ENCODE measurements at regions of chr15 and their contacts with region 1.

Region 1: DNA sequence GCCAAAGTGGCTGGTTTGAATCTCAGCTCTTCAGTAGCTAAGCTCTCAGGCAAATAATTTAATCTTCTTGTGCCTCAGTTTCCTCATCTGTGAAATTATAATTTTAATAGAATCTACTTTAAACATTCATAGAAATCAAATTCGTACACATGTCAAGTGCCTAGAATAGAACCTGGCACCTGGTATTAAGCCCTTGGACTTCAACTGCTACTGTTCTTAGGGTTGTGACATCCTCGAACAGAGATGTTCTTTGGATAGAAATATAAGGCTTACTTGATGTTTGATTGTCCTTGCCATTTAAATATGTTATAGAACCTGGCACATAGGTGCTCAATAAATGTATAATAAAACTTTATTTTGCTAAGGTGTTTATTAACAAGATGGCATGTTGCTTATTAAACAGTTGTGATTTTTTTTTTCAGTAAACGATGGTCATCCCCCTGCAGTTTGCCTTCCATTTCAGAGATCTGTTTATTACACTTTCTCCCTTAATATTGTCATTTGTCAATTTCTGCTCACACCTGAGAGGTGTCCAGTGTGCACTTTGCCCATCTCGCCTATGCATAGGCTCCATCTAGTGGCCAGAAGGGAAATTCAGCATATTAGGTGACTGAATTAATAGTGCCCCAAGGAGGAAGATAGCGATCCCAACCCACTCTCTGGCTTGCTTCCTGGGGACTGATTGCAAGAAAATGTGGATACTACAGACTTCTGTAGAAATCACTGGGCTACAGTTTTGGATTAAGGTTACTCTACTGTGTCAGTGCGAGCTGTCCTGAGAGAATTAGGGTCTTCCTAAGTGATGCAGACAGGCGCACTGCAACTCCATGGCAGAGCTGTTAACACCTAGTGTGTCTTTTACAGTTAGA is 10.7 kb downstream of the IGF1R start:
- DNase-seq: peak; percentile 74
- H3K4me3 ChIP-seq: no peak overlapping the region
- H3K27ac ChIP-seq: no peak overlapping the region
- H3K4me1 ChIP-seq: peaks cover 43% of the 10 kb centered on the region
- H3K27me3 ChIP-seq: no peaks in the 10 kb centered on the region

Region 2: DNA sequence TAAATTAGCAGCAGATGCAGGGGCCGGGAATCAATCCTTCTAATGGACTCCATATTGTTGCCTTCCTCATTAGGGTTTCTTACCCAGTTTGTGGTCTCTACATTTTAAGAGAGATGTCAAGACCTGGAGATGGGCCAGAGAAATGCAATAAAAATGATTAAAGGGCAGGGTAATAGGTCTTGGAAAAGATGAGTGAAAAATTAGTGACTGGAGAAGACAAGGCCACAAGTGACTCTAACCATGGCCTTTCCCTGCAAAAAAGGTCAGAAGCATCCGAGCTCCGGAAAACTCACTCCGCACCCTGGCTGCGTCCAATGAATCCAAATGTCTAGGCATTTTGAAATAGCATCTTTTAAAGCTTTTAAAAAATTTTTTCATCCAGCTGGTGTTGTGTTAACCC is 545.7 kb before region 1 on chr15:
- in situ Hi-C with region 1: no loop called
- DNase-seq: no peak
- H3K4me3 ChIP-seq: no peak overlapping the region
- H3K27ac ChIP-seq: no peak overlapping the region
- H3K4me1 ChIP-seq: no peaks in the 10 kb centered on the region
- H3K27me3 ChIP-seq: no peaks in the 10 kb centered on the region

Region 3: DNA sequence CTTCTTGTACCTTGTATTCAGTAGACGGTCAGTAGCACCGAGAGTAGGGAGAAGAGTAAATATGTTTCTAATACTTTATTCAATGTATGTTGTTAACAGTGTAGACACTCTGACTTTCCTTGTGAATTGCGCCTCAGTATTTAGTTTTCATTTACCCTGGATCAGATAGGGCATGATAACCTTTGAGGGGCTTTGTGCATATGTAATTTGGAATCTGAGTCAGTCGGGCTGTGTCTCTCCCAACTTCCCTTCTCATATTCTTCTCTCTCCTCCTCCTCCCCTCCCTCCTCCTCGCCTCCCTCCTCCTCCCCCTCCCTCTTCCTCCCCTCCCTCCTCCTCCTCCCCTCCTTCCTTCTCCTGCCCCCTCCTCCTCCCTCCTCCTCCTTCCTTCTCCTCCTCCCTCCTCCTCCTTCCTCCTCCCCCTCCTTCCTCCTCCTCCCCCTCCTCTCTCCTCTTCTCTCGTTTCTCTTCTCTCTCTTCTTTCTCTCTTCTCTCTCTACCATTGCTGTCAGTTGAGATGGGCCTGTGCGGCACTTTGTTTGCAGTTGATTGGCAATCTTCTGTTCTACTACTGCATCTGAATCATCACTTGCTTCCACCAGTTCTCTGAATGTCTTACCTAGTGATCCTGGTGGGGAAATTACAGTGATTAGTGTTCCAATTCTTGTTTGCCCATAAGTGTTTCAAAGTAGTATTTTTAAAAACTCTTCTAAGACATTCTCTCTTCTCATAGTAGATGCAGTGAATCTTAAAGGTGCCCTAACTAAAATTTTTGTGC is 186.2 kb after region 1 on chr15:
- in situ Hi-C with region 1: loop called (anchors 10 kb)
- DNase-seq: no peak
- H3K4me3 ChIP-seq: no peak overlapping the region
- H3K27ac ChIP-seq: no peak overlapping the region
- H3K4me1 ChIP-seq: peaks cover 16% of the 10 kb centered on the region
- H3K27me3 ChIP-seq: no peaks in the 10 kb centered on the region

Region 4: GRCh38 chr15:99059010-99059981 is 400.2 kb after region 1 on chr15:
- in situ Hi-C with region 1: loop called (anchors 25 kb)
- DNase-seq: peak; percentile 93
- H3K4me3 ChIP-seq: peak overlapping the region; percentile 81
- H3K27ac ChIP-seq: peak overlapping the region; percentile 54
- H3K4me1 ChIP-seq: 0 out of 2 replicates have a peak, but pooled peaks cover 3% of the 10 kb centered on the region
- H3K27me3 ChIP-seq: no peaks in the 10 kb centered on the region